CD4-positive, alpha-beta memory T cell (primary cell): ENCODE measurements at regions of chr17 and their contacts with region 1.

Region 1: GRCh38 chr17:75764711-75765421 is at the start of gene GALK1:
- DNase-seq: peak; percentile 67 to 73 (median 72)
- H3K4me3 ChIP-seq: peak within 1 kb of the TSS; percentile 42 to 73
- H3K4me3 Mint-ChIP-seq: peak within 1 kb of the TSS; percentile 72 to 83 (median 78)
- H3K27ac ChIP-seq: peak within 1 kb of the TSS; percentile 58
- H3K27ac Mint-ChIP-seq: peak within 1 kb of the TSS; percentile 52 to 88 (median 72)
- H3K4me1 ChIP-seq: peaks cover 17% of the 10 kb centered on the region
- H3K4me1 Mint-ChIP-seq: peaks cover 6 to 26% (median 10%) of the 10 kb centered on the region in 4 donors
- H3K27me3 ChIP-seq: no peaks in the 10 kb centered on the region
- H3K27me3 Mint-ChIP-seq: no peaks in the 10 kb centered on the region
- total RNA-seq, gene GALK1: 25.7 to 25.9 TPM

Region 2: DNA sequence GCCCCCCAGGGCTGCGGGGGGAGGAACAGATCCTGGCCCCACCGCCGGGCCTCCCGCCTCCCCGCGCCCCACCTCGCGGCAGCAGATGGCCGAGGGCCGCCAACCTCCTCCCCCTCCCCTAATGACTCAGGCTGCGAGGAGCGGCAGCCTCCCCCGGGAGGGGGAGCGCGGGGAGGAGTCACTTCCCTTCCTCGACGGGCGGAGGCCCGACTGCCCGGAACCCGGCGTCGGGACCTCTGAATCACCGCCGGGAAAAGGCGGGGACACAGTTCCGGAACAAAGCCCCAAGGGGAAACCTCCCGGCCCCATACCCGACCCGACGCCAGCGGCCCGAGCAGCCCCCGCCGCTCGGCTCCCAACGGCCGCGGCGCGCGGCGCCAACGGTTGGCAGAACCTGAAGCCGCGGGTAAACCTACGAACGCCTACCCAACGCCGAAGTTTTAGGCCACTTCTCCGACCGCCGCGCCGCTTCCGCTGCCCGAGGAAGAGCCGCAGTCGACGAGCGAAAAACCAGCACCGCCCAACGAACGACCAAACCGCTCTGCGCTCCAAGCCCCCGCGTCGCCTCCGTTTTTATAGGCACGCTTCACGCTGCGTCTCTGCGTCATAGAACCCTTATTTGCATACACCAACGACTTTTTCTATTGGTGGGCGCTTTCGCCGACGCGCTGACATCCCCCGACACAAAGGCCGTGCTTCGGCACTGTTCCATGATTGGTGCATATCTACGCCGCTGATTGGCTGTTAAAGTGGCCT is 14.5 kb after region 1 on chr17:
- CTCF ChIA-PET with region 1: interaction called, 56 read pairs
- POLR2A ChIA-PET with region 1: interaction called, 259 read pairs
- intact Hi-C with region 1: loop called (anchors 1 kb)
- DNase-seq: peak; percentile 94 to 98 (median 98)
- H3K4me3 ChIP-seq: peak overlapping the region; percentile 18 to 84
- H3K4me3 Mint-ChIP-seq: peak overlapping the region; percentile 94 to 99 (median 98)
- H3K27ac ChIP-seq: peak overlapping the region; percentile 98
- H3K27ac Mint-ChIP-seq: peak overlapping the region; percentile 96 to 100 (median 99)
- H3K4me1 ChIP-seq: peaks cover 45% of the 10 kb centered on the region
- H3K4me1 Mint-ChIP-seq: peaks cover 32 to 70% (median 47%) of the 10 kb centered on the region in 4 donors
- H3K27me3 ChIP-seq: no peaks in the 10 kb centered on the region
- H3K27me3 Mint-ChIP-seq: peaks cover 1 to 2% of the 10 kb centered on the region in 2 donors

Region 3: GRCh38 chr17:75822119-75822799 is 57.4 kb after region 1 on chr17:
- CTCF ChIA-PET with region 1: interaction called, 25 read pairs
- POLR2A ChIA-PET with region 1: interaction called, 16 read pairs
- intact Hi-C with region 1: loop called (anchors 1 kb)
- DNase-seq: peak in 4 of 5 donors; percentile 33 to 35 (median 34)
- H3K4me3 ChIP-seq: no peak overlapping the region
- H3K4me3 Mint-ChIP-seq: peak overlapping the region in 2 of 8 donors; percentile 54 to 67
- H3K27ac ChIP-seq: peak overlapping the region; percentile 26
- H3K27ac Mint-ChIP-seq: peak overlapping the region; percentile 78 to 91 (median 84)
- H3K4me1 ChIP-seq: peaks cover 22% of the 10 kb centered on the region
- H3K4me1 Mint-ChIP-seq: peaks cover 12 to 23% (median 16%) of the 10 kb centered on the region in 4 donors
- H3K27me3 ChIP-seq: no peaks in the 10 kb centered on the region
- H3K27me3 Mint-ChIP-seq: no peaks in the 10 kb centered on the region

Region 4: DNA sequence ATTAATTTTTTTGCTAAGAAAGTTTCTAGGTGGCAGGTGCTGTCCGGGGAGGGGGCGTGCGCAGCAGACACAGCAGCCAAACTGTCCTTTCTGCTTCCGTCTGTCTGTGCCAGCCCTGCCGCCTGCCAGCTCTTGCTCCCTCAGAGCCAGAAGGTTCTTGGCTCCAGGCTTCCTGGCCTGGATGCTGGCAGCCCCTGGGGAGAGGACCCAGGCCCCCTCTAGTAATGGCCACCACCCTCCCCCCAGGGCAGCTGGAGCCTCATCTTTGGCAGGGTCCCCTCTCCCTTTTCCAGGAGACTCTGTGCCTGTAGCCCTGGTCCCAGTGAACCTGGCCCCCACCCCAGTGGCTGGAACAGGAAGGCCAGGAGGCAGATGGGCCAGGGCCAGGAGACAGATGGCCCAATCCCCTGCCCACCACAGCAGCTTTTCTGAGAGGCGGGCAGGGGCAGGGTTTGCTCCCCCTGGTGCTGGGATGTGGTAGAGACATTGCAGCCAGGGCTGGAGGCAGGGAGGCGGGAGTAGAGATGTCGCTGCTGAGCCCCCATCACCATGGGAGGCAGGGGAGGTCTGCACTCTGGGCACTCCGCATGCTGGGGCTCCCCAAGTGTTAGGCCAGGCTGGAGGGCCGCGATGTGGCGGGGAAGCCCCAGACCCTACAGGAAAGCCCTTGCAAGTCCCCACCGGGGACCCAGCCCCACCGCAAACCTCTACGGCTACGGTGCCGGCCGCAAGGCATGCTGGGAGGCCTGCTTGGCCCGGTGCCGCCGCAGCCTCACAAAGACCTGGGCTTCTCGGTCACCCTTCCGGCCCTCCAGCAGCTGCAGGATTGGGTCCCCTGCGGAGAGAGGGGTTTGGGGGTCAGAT is 62.6 kb after region 1 on chr17:
- CTCF ChIA-PET with region 1: interaction called, 25 read pairs
- POLR2A ChIA-PET with region 1: interaction called, 16 read pairs
- intact Hi-C with region 1: loop called (anchors 1 kb)
- DNase-seq: peak; percentile 55 to 80 (median 71)
- H3K4me3 ChIP-seq: no peak overlapping the region
- H3K4me3 Mint-ChIP-seq: peak overlapping the region; percentile 17 to 73 (median 56)
- H3K27ac ChIP-seq: peak overlapping the region; percentile 59
- H3K27ac Mint-ChIP-seq: peak overlapping the region; percentile 66 to 91 (median 83)
- H3K4me1 ChIP-seq: peaks cover 26% of the 10 kb centered on the region
- H3K4me1 Mint-ChIP-seq: peaks cover 5 to 24% (median 14%) of the 10 kb centered on the region in 4 donors
- H3K27me3 ChIP-seq: no peaks in the 10 kb centered on the region
- H3K27me3 Mint-ChIP-seq: no peaks in the 10 kb centered on the region

Region 5: DNA sequence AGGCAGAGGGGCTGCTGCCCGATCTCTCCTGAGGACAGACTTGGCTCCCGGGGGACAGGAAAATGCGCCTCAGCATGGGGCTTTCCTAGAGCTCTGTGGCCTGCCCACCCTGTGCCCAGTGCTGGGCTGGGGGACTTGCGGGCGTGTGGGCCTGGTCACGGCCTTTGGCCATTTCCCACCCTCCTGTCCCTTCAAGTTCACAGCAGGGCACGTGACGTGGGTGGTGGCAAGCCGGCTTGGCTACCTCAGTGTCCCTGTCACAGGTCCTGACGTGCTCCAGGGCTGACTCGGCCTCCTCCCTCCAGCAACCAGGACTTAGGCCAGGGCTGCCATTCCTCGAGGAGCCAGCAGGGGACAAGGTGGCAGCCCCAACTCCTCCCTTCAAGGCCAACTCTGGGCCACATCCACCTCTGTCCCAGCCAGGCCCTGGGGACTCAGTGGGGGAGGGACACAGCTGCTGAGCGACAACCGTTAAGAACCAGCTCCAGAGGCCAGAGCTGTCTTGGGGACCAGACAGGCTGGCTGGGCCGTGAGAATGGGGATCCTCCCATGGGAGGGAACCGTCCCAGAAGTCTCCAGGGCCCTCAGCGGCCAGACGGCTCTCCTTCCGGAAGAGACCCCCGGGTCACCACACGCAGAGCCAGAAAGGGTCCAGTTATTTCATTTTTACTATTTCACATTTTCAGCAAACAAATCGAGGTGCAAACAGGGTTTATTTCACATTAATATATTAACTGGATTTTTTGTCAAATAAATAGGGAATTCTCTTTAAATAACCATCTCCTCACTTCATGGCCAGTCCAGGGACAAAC is 80.4 kb after region 1 on chr17:
- CTCF ChIA-PET with region 1: interaction called, 46 read pairs
- POLR2A ChIA-PET with region 1: interaction called, 33 read pairs
- intact Hi-C with region 1: loop called (anchors 1 kb)
- DNase-seq: peak; percentile 44 to 73 (median 49)
- H3K4me3 ChIP-seq: no peak overlapping the region
- H3K4me3 Mint-ChIP-seq: peak overlapping the region; percentile 25 to 50 (median 41)
- H3K27ac ChIP-seq: peak overlapping the region; percentile 90
- H3K27ac Mint-ChIP-seq: peak overlapping the region; percentile 47 to 90 (median 77)
- H3K4me1 ChIP-seq: peaks cover 49% of the 10 kb centered on the region
- H3K4me1 Mint-ChIP-seq: peaks cover 5 to 39% (median 22%) of the 10 kb centered on the region in 4 donors
- H3K27me3 ChIP-seq: no peaks in the 10 kb centered on the region
- H3K27me3 Mint-ChIP-seq: no peaks in the 10 kb centered on the region

Region 6: GRCh38 chr17:75864448-75864871 is 99.6 kb after region 1 on chr17:
- CTCF ChIA-PET with region 1: interaction called, 11 read pairs
- POLR2A ChIA-PET with region 1: interaction called, 3 read pairs
- intact Hi-C with region 1: no loop called
- DNase-seq: peak; percentile 44 to 82 (median 50)
- H3K4me3 ChIP-seq: no peak overlapping the region
- H3K4me3 Mint-ChIP-seq: peak overlapping the region in 7 of 8 donors; percentile 54 to 84 (median 67)
- H3K27ac ChIP-seq: peak overlapping the region; percentile 60
- H3K27ac Mint-ChIP-seq: peak overlapping the region; percentile 90 to 94 (median 93)
- H3K4me1 ChIP-seq: peaks cover 23% of the 10 kb centered on the region
- H3K4me1 Mint-ChIP-seq: peaks cover 15 to 34% (median 25%) of the 10 kb centered on the region in 4 donors
- H3K27me3 ChIP-seq: no peaks in the 10 kb centered on the region
- H3K27me3 Mint-ChIP-seq: no peaks in the 10 kb centered on the region

Region 7: GRCh38 chr17:75877752-75878173 is 112.9 kb after region 1 on chr17:
- CTCF ChIA-PET with region 1: interaction called, 11 read pairs
- POLR2A ChIA-PET with region 1: interaction called, 4 read pairs
- intact Hi-C with region 1: no loop called
- DNase-seq: peak; percentile 71 to 76 (median 75)
- H3K4me3 ChIP-seq: peak overlapping the region; percentile 61 to 76
- H3K4me3 Mint-ChIP-seq: peak overlapping the region; percentile 89 to 95 (median 91)
- H3K27ac ChIP-seq: peak overlapping the region; percentile 56
- H3K27ac Mint-ChIP-seq: peak overlapping the region; percentile 88 to 97 (median 94)
- H3K4me1 ChIP-seq: peaks cover 64% of the 10 kb centered on the region
- H3K4me1 Mint-ChIP-seq: peaks cover 26 to 62% (median 45%) of the 10 kb centered on the region in 4 donors
- H3K27me3 ChIP-seq: no peaks in the 10 kb centered on the region
- H3K27me3 Mint-ChIP-seq: no peaks in the 10 kb centered on the region

Region 8: DNA sequence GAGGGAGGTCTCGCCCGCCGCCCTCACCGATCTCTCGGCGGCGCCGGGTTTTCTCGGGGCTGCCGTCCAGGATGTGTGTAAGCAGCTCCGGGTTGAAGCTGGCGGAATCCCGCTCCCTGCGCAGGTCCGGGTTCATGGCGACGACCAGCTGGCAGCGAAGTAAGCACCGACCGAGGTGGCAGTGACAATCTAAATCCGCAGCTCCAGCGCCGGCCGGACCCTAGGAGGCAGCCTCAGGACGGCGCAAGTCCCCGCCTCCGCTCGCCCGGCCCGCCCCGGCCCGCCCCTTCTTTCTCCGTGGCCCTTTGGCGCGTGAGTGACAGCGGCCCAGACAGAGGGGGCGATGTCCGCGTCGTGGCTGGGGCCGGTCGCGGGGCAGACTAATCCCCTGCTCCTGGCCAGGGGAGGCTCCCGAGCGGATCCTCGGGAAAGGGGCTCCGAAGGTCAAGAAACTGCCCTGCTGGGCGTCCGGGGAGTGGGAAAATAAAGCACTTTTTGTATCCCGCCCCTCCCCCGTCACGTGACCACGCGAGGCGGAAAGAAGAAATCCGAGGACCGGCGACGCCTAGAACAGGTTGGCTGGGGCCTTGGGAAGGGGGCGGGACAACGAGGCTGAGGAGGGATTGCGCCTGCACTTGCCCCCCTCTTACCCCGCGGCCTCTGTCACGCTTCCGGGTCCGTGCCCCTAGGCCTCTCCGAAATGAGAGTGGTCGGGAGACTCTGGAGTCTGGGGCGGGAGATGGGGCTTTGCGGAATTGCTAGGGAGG is 214.3 kb after region 1 on chr17 and contains the starts of genes ACOX1 and TEN1:
- CTCF ChIA-PET with region 1: no interaction called
- POLR2A ChIA-PET with region 1: no interaction called
- intact Hi-C with region 1: no loop called
- DNase-seq: peak; percentile 93 to 97 (median 95)
- H3K4me3 ChIP-seq: peak within 1 kb of the TSS; percentile 61 to 88
- H3K4me3 Mint-ChIP-seq: peak within 1 kb of the TSS; percentile 93 to 99 (median 96)
- H3K27ac ChIP-seq: peak within 1 kb of the TSS; percentile 79
- H3K27ac Mint-ChIP-seq: peak within 1 kb of the TSS; percentile 99 to 100 (median 99)
- H3K4me1 ChIP-seq: peaks cover 30% of the 10 kb centered on the region
- H3K4me1 Mint-ChIP-seq: peaks cover 18 to 57% (median 34%) of the 10 kb centered on the region in 4 donors
- H3K27me3 ChIP-seq: no peaks in the 10 kb centered on the region
- H3K27me3 Mint-ChIP-seq: no peaks in the 10 kb centered on the region
- total RNA-seq, gene ACOX1: 30.4 to 31.7 TPM
- total RNA-seq, gene TEN1: 10.2 to 16.1 TPM

Region 9: DNA sequence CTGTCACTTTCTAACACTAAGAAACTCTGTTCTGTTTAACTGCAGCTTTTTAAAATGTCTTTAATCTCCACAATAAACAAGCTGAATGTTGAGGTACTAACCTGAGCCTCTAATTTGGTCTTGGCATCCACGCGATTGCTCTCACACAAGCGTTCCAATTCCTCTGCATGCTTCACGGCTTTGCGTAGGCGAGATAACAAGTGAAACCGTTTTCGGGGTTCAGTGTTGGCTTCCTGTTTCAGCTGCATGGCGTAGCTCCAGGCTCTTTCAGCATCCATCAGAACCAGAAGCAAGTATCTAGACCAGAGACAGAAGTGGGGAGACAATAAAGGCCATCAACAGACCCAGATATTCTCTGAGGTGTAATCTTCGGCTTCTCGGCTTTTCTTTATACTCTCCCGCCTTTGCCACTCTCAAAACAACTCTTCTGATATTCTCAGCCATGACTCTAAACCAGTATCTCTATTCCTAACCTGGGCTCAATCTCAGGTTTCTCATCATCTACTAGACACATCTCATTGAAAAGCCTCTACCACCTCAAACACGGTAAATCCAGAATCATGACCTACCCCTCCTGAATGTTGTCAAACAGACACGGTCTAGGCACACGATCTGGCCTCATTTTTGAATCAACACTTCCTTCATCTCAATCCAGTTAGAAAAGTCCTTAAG is 299.1 kb after region 1 on chr17:
- CTCF ChIA-PET with region 1: no interaction called
- POLR2A ChIA-PET with region 1: no interaction called
- intact Hi-C with region 1: no loop called
- DNase-seq: peak; percentile 50 to 78 (median 61)
- H3K4me3 ChIP-seq: no peak overlapping the region
- H3K4me3 Mint-ChIP-seq: peak overlapping the region; percentile 69 to 92 (median 74)
- H3K27ac ChIP-seq: peak overlapping the region; percentile 47
- H3K27ac Mint-ChIP-seq: peak overlapping the region; percentile 92 to 98 (median 97)
- H3K4me1 ChIP-seq: peaks cover 16% of the 10 kb centered on the region
- H3K4me1 Mint-ChIP-seq: peaks cover 18 to 34% (median 22%) of the 10 kb centered on the region in 4 donors
- H3K27me3 ChIP-seq: no peaks in the 10 kb centered on the region
- H3K27me3 Mint-ChIP-seq: no peaks in the 10 kb centered on the region